ENCODE measurements at regions of chr15 and their contacts with region 1.

Region 1: GRCh38 chr15:39641187-39641889 is 60.5 kb downstream of the THBS1 start:
- DNase-seq: peak; percentile 89
- ATAC-seq: peak; percentile 75
- H3K4me3 ChIP-seq: peak overlapping the region; percentile 24; the same call in 1 of the 2 replicates
- H3K27ac ChIP-seq: peak overlapping the region; percentile 92
- H3K4me1 ChIP-seq: peaks cover 32% of the 10 kb centered on the region
- H3K27me3 ChIP-seq: no peaks in the 10 kb centered on the region
- CTCF ChIP-seq: peak; percentile 34; the same call in 1 of the 2 replicates

Region 2: GRCh38 chr15:39594056-39594763 is 47.1 kb before region 1 on chr15:
- CTCF ChIA-PET with region 1: no interaction called
- POLR2A ChIA-PET with region 1: no interaction called
- intact Hi-C with region 1: no loop called
- DNase-seq: peak; percentile 7
- ATAC-seq: peak; percentile 12; the same call in 1 of the 2 replicates
- H3K4me3 ChIP-seq: no peak overlapping the region
- H3K27ac ChIP-seq: no peak overlapping the region
- H3K4me1 ChIP-seq: peaks cover 20% of the 10 kb centered on the region
- H3K27me3 ChIP-seq: no peaks in the 10 kb centered on the region
- CTCF ChIP-seq: 0 out of 2 replicates have a peak, but pooled peaks have one; percentile 11

Region 3: GRCh38 chr15:39624806-39625205 is 16.5 kb before region 1 on chr15:
- CTCF ChIA-PET with region 1: interaction called, 7 read pairs
- POLR2A ChIA-PET with region 1: no interaction called
- intact Hi-C with region 1: loop called (anchors 1 kb)
- DNase-seq: peak; percentile 88
- ATAC-seq: peak; percentile 84
- H3K4me3 ChIP-seq: no peak overlapping the region
- H3K27ac ChIP-seq: peak overlapping the region; percentile 60
- H3K4me1 ChIP-seq: peaks cover 54% of the 10 kb centered on the region
- H3K27me3 ChIP-seq: no peaks in the 10 kb centered on the region
- CTCF ChIP-seq: no peak

Region 4: DNA sequence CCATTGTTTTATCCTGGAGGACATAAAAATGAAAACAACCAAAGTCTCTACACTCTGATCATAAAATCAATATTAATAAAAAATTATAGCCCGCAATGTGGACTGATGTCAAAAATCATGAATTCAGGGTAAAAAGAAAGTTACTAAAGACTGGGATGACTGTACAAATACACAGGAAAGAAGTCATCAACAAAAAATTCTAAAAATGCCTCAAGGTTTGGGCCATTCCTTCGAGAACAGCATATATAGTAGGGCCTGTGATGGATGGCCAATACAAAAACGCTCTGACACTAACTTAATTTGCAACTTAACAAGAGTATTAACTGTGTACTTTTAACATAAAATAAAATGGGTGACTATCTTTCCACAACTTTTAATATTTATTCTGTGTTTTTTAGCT is 16.4 kb after region 1 on chr15:
- CTCF ChIA-PET with region 1: no interaction called
- POLR2A ChIA-PET with region 1: interaction called, 3 read pairs
- intact Hi-C with region 1: loop called (anchors 1 kb)
- DNase-seq: peak; percentile 81
- ATAC-seq: peak; percentile 95
- H3K4me3 ChIP-seq: no peak overlapping the region
- H3K27ac ChIP-seq: no peak overlapping the region
- H3K4me1 ChIP-seq: peaks cover 20% of the 10 kb centered on the region
- H3K27me3 ChIP-seq: no peaks in the 10 kb centered on the region
- CTCF ChIP-seq: no peak